Lower lobe of right lung (tissue), 2 donors: ENCODE measurements at regions of chr4 and their contacts with region 1.

Region 1: GRCh38 chr4:109424093-109424841 is 9.3 kb upstream of the SEC24B start:
- DNase-seq: no peak
- ATAC-seq: no peak
- H3K4me3 ChIP-seq: no peak overlapping the region
- H3K27ac ChIP-seq: no peak overlapping the region
- H3K4me1 ChIP-seq: no peaks in the 10 kb centered on the region
- H3K27me3 ChIP-seq: no peaks in the 10 kb centered on the region
- CTCF ChIP-seq: no peak

Region 2: DNA sequence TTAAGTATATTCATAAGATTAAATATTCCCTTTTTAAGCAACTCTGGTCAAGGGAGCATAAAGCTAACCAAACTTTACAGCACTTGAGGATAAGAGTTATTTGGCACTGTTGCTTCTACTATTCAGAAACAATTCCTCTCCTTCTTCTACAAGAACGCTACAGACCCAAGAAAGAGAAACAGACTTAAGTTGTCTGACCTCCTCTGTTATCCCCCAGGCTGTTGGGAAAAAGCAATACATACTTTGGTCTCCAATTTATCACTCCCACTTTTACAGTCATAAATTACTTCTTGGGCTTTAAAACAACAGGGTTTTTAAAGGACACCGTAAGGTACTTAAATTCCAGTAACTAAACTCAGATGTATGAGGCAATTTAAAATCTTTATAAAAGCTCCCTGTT is 269.2 kb before region 1 on chr4:
- intact Hi-C with region 1: no loop called
- DNase-seq: no peak
- ATAC-seq: no peak
- H3K4me3 ChIP-seq: no peak overlapping the region
- H3K27ac ChIP-seq: no peak overlapping the region
- H3K4me1 ChIP-seq: no peaks in the 10 kb centered on the region
- H3K27me3 ChIP-seq: no peaks in the 10 kb centered on the region
- CTCF ChIP-seq: no peak

Region 3: GRCh38 chr4:109729718-109730618 is 305.7 kb after region 1 on chr4 and contains the start of gene PLA2G12A:
- intact Hi-C with region 1: no loop called
- DNase-seq: peak; percentile 93
- ATAC-seq: peak; percentile 98 to 99
- H3K4me3 ChIP-seq: peak within 1 kb of the TSS; percentile 76
- H3K27ac ChIP-seq: peak within 1 kb of the TSS; percentile 80
- H3K4me1 ChIP-seq: peaks cover 15% of the 10 kb centered on the region
- H3K27me3 ChIP-seq: no peaks in the 10 kb centered on the region
- CTCF ChIP-seq: no peak
- total RNA-seq, gene PLA2G12A: 32.0 TPM

Region 4: DNA sequence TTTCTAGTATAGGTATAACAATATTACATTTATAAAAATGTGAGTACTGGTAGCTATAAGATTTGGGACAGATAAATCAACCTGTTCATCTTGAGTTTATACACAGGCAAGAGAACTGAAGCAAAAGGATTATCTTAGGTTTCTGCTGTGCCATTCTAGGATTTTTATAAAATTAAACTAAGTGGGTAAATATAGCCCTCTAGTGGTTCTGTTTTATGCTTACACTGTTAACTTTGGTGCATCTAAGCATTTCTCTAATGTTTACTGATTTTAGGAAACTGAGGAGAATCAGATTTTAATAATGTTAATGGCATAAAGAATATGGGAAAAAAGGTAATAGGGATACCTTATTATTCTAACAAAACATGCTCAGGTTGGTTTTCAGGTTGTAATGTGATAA is 402.5 kb after region 1 on chr4:
- intact Hi-C with region 1: loop called (anchors 10 kb)
- DNase-seq: no peak
- ATAC-seq: peak in 1 of 2 donors; percentile 51
- H3K4me3 ChIP-seq: no peak overlapping the region
- H3K27ac ChIP-seq: no peak overlapping the region
- H3K4me1 ChIP-seq: no peaks in the 10 kb centered on the region
- H3K27me3 ChIP-seq: no peaks in the 10 kb centered on the region
- CTCF ChIP-seq: peak; percentile 54

Region 5: DNA sequence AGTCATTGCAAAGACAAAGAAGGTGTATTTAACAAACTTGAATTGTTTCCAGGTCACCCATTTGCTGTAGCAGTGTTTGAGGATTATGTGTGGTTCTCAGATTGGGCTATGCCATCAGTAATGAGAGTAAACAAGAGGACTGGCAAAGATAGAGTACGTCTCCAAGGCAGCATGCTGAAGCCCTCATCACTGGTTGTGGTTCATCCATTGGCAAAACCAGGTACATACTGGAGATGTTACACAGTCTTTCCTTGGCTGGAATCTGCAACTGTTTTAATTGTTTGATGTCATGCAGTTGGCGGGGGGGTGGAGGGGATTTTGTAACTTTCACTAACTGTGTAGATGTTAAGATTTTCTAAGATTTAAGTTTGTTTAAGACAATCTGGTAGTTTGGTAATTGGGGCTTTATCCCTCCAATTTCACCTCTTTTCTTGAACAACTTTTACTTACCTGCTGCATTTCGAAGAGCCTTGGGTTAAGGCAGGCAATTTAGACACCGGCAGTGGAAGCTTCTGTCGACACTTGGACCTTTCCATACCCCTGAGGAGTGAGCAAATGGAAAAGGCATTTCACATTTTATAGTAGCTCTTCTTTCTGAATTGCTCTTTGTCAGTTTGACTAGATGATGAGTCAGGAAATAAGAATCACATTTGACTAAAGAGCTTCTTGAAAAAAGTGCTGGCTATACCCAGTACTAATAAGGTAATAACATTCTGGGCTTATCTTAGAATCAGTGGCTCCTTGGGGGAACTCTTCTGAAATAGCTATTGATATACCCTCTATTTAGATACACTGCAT is 555.9 kb after region 1 on chr4:
- intact Hi-C with region 1: loop called (anchors 10 kb)
- DNase-seq: no peak
- ATAC-seq: no peak
- H3K4me3 ChIP-seq: no peak overlapping the region
- H3K27ac ChIP-seq: no peak overlapping the region
- H3K4me1 ChIP-seq: no peaks in the 10 kb centered on the region
- H3K27me3 ChIP-seq: no peaks in the 10 kb centered on the region
- CTCF ChIP-seq: no peak